Endothelial cell of umbilical vein (primary cell): ENCODE measurements at regions of chr13 and their contacts with region 1.

Region 1: GRCh38 chr13:26186118-26186870 is 35.8 kb downstream of the RNF6 start:
- DNase-seq: peak; percentile 92
- H3K4me3 ChIP-seq: peak overlapping the region; percentile 40 to 83 (median 71)
- H3K27ac ChIP-seq: no peak overlapping the region
- H3K4me1 ChIP-seq: peaks cover 11% of the 10 kb centered on the region
- H3K27me3 ChIP-seq: peaks cover 0 to 3% of the 10 kb centered on the region in 2 experiments
- CTCF ChIP-seq: peak; percentile 43 to 68
- POLR2A ChIP-seq: peak; percentile 51

Region 2: DNA sequence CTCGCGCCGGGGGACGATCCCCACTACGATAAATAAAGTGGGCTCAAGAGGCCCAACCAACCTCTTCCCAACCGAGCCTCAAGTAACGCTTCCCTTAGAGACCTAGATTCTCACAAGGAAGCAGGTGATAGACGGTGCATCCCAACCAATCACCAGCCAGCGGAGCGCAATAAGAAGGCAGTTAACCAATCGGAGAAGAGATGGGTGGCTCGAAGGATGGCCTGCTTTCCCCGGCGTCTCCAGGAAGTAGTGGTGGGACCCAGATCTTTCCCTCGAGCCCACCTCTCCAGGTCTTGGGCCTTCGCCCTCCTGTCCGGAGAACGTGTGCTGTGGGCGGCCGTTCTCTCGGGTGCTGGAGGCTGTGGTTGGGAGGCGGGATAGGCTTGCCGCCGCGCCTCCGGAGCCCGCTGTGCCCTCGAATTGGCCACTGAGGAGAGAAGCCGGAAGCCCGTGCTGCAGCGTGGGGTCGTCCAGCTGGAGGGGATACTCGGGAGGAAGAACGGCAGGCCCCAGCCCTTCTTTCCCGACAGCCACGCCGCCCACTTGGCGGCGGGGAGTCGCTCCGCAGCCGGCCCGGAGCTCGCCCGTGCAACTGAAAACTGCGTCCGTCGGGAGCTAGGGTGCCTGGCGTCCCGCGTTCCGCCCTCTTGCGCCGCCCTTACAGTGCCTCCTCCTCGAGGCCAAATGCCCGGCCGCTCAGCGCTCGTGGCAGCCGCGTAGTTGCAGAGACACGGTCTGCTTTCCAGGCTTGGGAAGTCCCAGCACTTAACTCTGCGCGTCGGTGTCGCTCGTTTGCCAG is 35.6 kb after region 1 on chr13 and contains the start of gene RNF6:
- CTCF ChIA-PET with region 1: interaction called, 11 read pairs
- POLR2A ChIA-PET with region 1: interaction called, 7 read pairs
- dilution Hi-C with region 1: no loop called
- intact Hi-C with region 1: loop called (anchors 1 kb)
- DNase-seq: peak; percentile 98
- H3K4me3 ChIP-seq: peak within 1 kb of the TSS; percentile 51 to 98 (median 79)
- H3K27ac ChIP-seq: peak within 1 kb of the TSS; percentile 89
- H3K4me1 ChIP-seq: peaks cover 21% of the 10 kb centered on the region
- H3K27me3 ChIP-seq: peaks cover 0 to 10% of the 10 kb centered on the region in 2 experiments
- CTCF ChIP-seq: no peak
- POLR2A ChIP-seq: peak; percentile 75
- total RNA-seq, gene RNF6: 36.4 and 38.3 TPM in 2 replicates

Region 3: GRCh38 chr13:26253787-26254582 is 67.7 kb after region 1 on chr13 and contains the start of gene CDK8:
- CTCF ChIA-PET with region 1: interaction called, 3 read pairs
- POLR2A ChIA-PET with region 1: no interaction called
- dilution Hi-C with region 1: no loop called
- intact Hi-C with region 1: loop called (anchors 2 kb)
- DNase-seq: peak; percentile 89
- H3K4me3 ChIP-seq: peak within 1 kb of the TSS; percentile 65 to 95 (median 71)
- H3K27ac ChIP-seq: peak within 1 kb of the TSS; percentile 75
- H3K4me1 ChIP-seq: peaks cover 18% of the 10 kb centered on the region
- H3K27me3 ChIP-seq: peaks cover 6 to 15% of the 10 kb centered on the region in 2 experiments
- CTCF ChIP-seq: no peak
- POLR2A ChIP-seq: no peak
- total RNA-seq, gene CDK8: 11.9 and 13.3 TPM in 2 replicates

Region 4: DNA sequence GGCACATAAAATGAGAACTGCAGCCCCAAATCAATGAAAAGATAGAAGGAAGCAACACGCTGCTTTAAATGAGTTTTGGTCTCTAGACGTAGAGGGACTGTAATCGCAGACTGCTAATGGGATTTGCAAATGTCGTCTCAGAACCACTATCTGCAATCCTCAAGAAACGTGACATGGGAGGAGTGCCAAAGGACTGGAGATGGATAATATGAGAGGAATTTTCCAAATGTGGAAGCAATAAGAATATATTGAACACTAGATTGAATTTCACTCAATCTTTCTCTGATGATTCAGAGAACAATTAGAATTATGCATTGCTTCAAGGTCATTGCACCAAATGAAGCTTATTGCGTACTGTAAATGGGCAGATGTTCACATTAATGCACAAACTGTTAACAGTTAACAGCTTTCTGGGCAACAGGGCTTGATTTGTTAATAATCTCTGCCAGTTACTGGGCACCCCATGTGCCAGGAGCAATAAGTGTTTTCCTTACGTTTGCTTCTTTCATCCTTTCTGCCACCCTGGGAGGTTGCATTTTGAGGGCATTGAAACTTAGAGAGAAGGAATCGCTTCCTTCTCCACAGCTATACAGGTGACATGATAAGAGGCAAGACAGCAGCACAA is 308.4 kb after region 1 on chr13:
- CTCF ChIA-PET with region 1: interaction called, 195 read pairs
- POLR2A ChIA-PET with region 1: no interaction called
- dilution Hi-C with region 1: no loop called
- intact Hi-C with region 1: loop called (anchors 1 kb)
- DNase-seq: no peak
- H3K4me3 ChIP-seq: no peak overlapping the region
- H3K27ac ChIP-seq: no peak overlapping the region
- H3K4me1 ChIP-seq: peaks cover 7% of the 10 kb centered on the region
- H3K27me3 ChIP-seq: peaks cover 5 to 7% of the 10 kb centered on the region in 2 experiments
- CTCF ChIP-seq: no peak
- POLR2A ChIP-seq: no peak

Region 5: GRCh38 chr13:26557393-26558023 is 371.2 kb after region 1 on chr13 and contains the start of gene WASF3:
- CTCF ChIA-PET with region 1: interaction called, 12 read pairs
- POLR2A ChIA-PET with region 1: no interaction called
- dilution Hi-C with region 1: no loop called
- intact Hi-C with region 1: loop called (anchors 2 kb)
- DNase-seq: peak; percentile 95
- H3K4me3 ChIP-seq: peak within 1 kb of the TSS; percentile 84 to 94 (median 85)
- H3K27ac ChIP-seq: peak within 1 kb of the TSS; percentile 20
- H3K4me1 ChIP-seq: peaks cover 29% of the 10 kb centered on the region
- H3K27me3 ChIP-seq: peaks cover 0 to 18% of the 10 kb centered on the region in 2 experiments
- CTCF ChIP-seq: no peak
- POLR2A ChIP-seq: peak; percentile 73
- total RNA-seq, gene WASF3: 29.7 and 32.4 TPM in 2 replicates

Region 6: DNA sequence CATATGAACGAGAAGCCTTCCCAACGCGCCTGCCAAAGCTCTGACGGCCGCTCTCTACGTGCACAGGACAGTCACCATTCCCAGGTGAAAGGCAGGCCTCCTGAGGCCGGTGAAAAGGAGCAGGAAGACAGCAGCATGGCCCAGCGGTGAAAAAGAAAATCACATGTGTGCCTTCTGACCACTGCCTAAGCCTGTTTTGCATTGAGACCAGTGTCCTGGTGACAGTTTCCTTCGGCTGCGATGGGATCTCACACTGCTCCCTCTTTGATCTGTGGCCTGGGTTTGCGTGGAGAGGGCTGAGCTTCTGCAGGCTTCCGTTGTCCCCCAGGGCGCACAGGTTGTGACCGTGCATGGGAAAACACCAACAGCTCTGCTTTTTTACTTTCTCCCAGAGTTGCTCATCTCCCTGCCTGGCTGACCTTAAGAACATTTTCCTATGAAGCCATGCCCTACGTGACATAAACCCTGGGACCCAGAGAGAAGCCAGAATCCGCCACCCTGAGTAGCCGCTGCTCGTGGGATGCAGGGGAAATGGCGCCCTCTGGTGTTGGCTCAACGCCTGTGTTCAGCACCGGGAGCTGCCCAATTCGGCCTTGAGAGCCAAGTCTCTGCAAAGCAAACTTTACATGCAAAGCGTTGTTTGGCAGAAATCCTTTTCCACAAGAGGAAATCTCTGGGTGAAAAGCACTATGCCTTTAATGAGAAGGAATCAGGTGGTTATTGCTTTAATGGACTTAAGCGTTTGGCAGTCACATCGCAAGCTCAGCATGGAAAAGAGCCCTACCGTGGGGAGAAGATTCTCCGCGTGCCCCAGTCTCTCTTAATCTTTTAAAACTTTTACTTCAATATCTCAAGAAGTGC is 686.5 kb after region 1 on chr13:
- CTCF ChIA-PET with region 1: interaction called, 116 read pairs
- POLR2A ChIA-PET with region 1: no interaction called
- dilution Hi-C with region 1: no loop called
- intact Hi-C with region 1: loop called (anchors 1 kb)
- DNase-seq: peak; percentile 29
- H3K4me3 ChIP-seq: no peak overlapping the region
- H3K27ac ChIP-seq: no peak overlapping the region
- H3K4me1 ChIP-seq: no peaks in the 10 kb centered on the region
- H3K27me3 ChIP-seq: no peaks in the 10 kb centered on the region
- CTCF ChIP-seq: peak; percentile 76 to 83
- POLR2A ChIP-seq: no peak